ENCODE measurements at regions of chr2 and their contacts with region 1.

Region 1: DNA sequence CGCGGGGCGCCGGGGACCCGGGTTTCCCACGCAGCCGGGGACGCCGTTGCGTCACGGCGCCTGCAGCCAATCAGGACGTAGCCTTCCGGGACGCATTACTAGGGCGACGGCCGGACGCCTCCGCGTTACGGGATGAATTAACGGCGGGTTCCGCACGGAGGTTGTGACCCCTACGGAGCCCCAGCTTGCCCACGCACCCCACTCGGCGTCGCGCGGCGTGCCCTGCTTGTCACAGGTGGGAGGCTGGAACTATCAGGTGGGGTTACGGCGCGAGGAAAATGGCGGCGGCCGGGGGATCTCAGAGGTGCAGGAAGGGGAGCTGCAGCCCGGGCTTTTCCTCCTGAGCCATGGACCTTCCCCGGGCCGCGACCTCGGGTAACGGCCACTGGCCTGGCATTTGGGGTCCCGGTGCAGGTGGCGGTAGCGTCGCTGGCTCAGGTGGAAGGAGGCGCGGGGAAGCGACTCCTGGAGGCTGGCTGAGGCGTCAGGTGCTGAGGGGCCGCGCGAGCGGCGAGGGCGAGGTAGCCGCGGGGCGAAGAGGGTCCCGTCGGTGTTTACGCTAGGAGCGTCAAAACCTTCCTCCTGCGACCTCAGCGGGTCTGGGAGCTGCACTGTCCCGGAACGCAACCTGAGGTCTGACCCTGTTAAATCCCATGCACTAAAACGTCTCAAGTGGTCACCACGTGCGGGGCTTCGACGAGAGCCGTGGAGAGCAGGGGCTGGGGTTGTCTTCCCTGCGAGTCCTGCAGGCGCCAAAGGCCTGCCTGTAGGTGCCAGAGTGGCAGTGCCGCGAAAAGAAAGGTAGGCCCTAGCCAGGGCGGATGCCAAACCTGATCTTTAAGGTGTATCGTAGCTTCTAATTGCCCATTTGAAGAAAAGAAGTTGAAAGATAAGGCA is at the start of gene LCLAT1:
- DNase-seq: peak; percentile 64 to 71
- ATAC-seq: peak; percentile 90 to 91
- H3K4me3 ChIP-seq: peak within 1 kb of the TSS; percentile 72 to 99 (median 96)
- H3K27ac ChIP-seq: peak within 1 kb of the TSS; percentile 68 to 88 (median 79)
- H3K4me1 ChIP-seq: peaks cover 17 to 18% of the 10 kb centered on the region in 2 donors
- H3K27me3 ChIP-seq: no peaks in the 10 kb centered on the region
- CTCF ChIP-seq: no peak
- POLR2A ChIP-seq: no peak
- total RNA-seq, gene LCLAT1: 4.3 to 14.5 (median 11.3) TPM

Region 2: DNA sequence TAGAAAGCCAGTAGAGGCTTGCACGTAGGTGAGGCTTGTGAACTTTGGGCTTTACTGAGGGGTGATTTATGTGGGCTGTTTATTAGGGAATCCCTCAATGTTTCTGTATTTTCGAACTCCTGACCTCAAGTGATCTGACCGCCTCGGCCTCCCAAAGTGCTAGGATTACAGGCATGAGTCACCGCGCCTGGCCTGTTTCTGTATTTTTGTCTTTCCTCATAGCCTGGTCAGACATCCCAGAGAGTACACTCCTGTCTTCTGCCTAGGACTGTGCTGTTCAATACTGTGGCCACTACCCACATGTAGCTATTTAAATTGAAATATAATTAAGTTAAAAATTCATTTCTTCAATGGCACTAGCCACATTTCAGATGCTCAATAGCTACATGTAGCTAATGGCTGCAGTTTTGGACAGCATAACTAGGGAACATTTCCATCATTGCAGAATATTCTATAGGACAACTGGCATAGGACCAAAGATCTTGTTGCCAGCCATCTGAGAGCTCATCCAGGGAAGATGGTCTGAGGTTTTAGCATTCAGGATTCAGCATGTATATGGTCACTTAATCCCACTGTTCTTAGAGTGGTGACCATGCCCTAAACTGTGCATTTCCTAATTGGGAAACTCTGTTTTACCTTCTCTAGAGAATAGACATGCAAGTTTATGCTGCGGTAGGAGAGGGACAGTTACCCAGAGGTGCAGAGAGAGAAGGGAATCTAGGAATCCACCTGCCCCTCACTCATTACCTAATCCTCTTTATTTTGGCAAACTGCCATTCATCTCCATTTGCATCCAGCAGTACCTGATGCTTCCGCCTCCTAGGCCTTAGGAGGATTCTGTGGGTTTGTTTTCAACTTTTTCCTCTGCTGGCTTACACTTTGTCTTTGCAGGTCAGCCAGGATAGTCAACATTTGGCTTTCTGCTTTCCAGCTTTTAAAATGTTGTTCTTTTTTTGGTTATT is 64.0 kb after region 1 on chr2:
- in situ Hi-C with region 1: no loop called
- intact Hi-C with region 1: loop called (anchors 5 kb)
- DNase-seq: peak; percentile 59 to 81
- ATAC-seq: peak; percentile 94 to 96
- H3K4me3 ChIP-seq: no peak overlapping the region
- H3K27ac ChIP-seq: peak overlapping the region; percentile 57 to 79 (median 73)
- H3K4me1 ChIP-seq: peaks cover 52 to 53% of the 10 kb centered on the region in 2 donors
- H3K27me3 ChIP-seq: no peaks in the 10 kb centered on the region
- CTCF ChIP-seq: no peak
- POLR2A ChIP-seq: no peak

Region 3: GRCh38 chr2:30584116-30584515 is 136.7 kb after region 1 on chr2:
- in situ Hi-C with region 1: no loop called
- intact Hi-C with region 1: loop called (anchors 5 kb)
- DNase-seq: no peak
- ATAC-seq: peak; percentile 55 to 84
- H3K4me3 ChIP-seq: no peak overlapping the region
- H3K27ac ChIP-seq: peak overlapping the region; percentile 46 to 74 (median 66)
- H3K4me1 ChIP-seq: peaks cover 15 to 38% of the 10 kb centered on the region in 2 donors
- H3K27me3 ChIP-seq: no peaks in the 10 kb centered on the region
- CTCF ChIP-seq: no peak
- POLR2A ChIP-seq: no peak

Measured in gastrocnemius medialis (tissue), 4 donors.